Activated B cell treated with CpG ODN at 0.5 μM for 24 hours (primary cell): ENCODE measurements at regions of chr12 and their contacts with region 1.

Region 1: DNA sequence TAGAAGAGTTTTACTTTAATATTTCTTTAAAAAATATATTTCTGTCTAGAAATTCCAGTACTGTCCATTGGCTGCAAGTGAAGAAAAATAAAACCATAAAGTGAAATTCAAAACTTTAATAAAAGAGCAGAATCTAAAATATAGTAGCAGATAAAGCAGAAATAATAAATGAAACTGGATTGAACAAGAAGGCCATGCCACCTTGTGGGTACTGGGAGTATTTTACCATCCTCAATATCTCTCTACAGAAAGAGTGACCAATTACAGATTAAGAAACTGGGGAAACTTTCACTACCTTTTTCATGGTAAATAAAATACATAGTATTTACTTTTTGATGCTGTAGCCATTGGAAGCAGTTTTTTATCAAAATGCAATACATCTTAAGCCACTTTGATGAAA is 220.5 kb downstream of the BCAT1 start:
- DNase-seq: no peak
- ATAC-seq: peak; percentile 26
- H3K4me3 Mint-ChIP-seq: no peak overlapping the region
- H3K27ac Mint-ChIP-seq: peak overlapping the region; percentile 85
- H3K4me1 Mint-ChIP-seq: peaks cover 98% of the 10 kb centered on the region
- H3K27me3 Mint-ChIP-seq: no peaks in the 10 kb centered on the region
- CTCF ChIP-seq: no peak

Region 2: DNA sequence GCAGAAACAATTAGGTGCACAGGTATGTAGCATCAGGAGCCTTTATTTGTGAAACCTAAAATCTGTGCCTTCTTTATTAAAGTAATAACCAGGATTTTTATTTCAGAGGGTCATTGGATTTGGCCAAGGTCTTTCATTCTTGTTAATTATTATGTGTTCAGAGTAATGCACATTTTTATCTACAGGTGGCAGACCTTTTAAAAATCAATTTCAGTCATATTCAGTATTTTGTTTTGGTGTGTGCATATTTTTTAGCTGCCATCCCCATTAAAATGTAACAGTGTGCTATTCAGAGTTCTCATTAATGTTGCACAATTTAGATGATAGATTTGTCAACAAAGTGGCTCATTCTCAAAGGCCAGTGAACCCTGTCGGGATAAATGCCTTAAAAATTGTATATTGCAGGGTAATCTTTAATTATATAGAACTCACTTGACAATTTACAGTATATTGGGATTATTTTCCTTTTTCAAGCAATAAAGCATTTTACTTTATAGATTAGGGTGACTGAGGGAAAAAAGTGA is 459.6 kb before region 1 on chr12:
- CTCF ChIA-PET with region 1: no interaction called
- POLR2A ChIA-PET with region 1: no interaction called
- intact Hi-C with region 1: loop called (anchors 5 kb)
- DNase-seq: no peak
- ATAC-seq: no peak
- H3K4me3 Mint-ChIP-seq: no peak overlapping the region
- H3K27ac Mint-ChIP-seq: no peak overlapping the region
- H3K4me1 Mint-ChIP-seq: no peaks in the 10 kb centered on the region
- H3K27me3 Mint-ChIP-seq: no peaks in the 10 kb centered on the region
- CTCF ChIP-seq: no peak

Region 3: DNA sequence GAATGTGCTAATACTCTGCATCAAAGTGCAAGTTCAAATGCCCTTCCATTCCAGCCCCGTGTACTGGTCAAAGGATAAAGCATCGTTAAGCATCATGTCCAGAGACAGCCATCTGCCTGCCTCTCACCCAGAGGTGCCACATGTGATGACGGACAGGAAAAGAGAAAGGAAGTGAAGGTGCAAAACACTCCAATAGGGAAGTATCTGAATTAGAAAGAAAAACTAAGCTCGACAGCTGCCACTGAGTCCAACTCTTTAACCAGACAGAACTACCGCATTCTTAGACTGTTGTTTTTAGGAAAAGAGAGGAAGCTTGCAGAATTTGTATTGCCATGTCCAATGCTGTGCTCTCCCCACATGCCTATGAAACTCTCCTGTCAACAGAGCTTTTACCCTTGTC is 313.9 kb before region 1 on chr12:
- CTCF ChIA-PET with region 1: interaction called, 4 read pairs
- POLR2A ChIA-PET with region 1: interaction called, 20 read pairs
- intact Hi-C with region 1: loop called (anchors 2 kb)
- DNase-seq: no peak
- ATAC-seq: peak; percentile 36
- H3K4me3 Mint-ChIP-seq: peak overlapping the region; percentile 80
- H3K27ac Mint-ChIP-seq: peak overlapping the region; percentile 89
- H3K4me1 Mint-ChIP-seq: peaks cover 61% of the 10 kb centered on the region
- H3K27me3 Mint-ChIP-seq: no peaks in the 10 kb centered on the region
- CTCF ChIP-seq: no peak

Region 4: GRCh38 chr12:24596768-24597388 is 131.5 kb before region 1 on chr12:
- CTCF ChIA-PET with region 1: interaction called, 3 read pairs
- POLR2A ChIA-PET with region 1: interaction called, 11 read pairs
- intact Hi-C with region 1: loop called (anchors 1 kb)
- DNase-seq: no peak
- ATAC-seq: no peak
- H3K4me3 Mint-ChIP-seq: no peak overlapping the region
- H3K27ac Mint-ChIP-seq: no peak overlapping the region
- H3K4me1 Mint-ChIP-seq: peaks cover 42% of the 10 kb centered on the region
- H3K27me3 Mint-ChIP-seq: no peaks in the 10 kb centered on the region
- CTCF ChIP-seq: no peak

Region 5: GRCh38 chr12:24742378-24742777 is 14.0 kb after region 1 on chr12:
- CTCF ChIA-PET with region 1: interaction called, 8 read pairs
- POLR2A ChIA-PET with region 1: interaction called, 73 read pairs
- intact Hi-C with region 1: loop called (anchors 1 kb)
- DNase-seq: peak; percentile 29
- ATAC-seq: peak; percentile 87
- H3K4me3 Mint-ChIP-seq: peak overlapping the region; percentile 64
- H3K27ac Mint-ChIP-seq: peak overlapping the region; percentile 90
- H3K4me1 Mint-ChIP-seq: peaks cover 56% of the 10 kb centered on the region
- H3K27me3 Mint-ChIP-seq: no peaks in the 10 kb centered on the region
- CTCF ChIP-seq: no peak

Region 6: GRCh38 chr12:24759155-24759554 is 30.8 kb after region 1 on chr12:
- CTCF ChIA-PET with region 1: no interaction called
- POLR2A ChIA-PET with region 1: no interaction called
- intact Hi-C with region 1: no loop called
- DNase-seq: no peak
- ATAC-seq: no peak
- H3K4me3 Mint-ChIP-seq: no peak overlapping the region
- H3K27ac Mint-ChIP-seq: no peak overlapping the region
- H3K4me1 Mint-ChIP-seq: peaks cover 5% of the 10 kb centered on the region
- H3K27me3 Mint-ChIP-seq: no peaks in the 10 kb centered on the region
- CTCF ChIP-seq: no peak

Region 7: DNA sequence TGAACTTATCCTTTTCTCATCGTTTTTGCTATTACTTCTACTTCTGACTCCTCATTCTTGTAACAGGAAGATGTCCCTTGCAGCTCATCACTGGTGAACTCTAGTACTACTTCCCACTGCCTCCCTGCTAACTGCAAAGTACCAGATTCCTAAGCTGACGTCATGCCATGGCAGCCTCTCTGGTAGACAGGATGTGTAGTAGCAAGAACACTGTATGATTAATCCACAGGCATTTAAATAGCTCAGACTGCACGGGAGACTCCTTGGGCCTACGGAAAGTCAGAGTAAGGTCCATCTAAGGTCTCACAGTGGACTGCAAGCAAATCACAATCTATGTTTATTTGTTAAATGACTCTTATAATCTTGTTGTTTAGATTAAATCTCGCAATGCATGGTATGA is 423.1 kb after region 1 on chr12:
- CTCF ChIA-PET with region 1: no interaction called
- POLR2A ChIA-PET with region 1: no interaction called
- intact Hi-C with region 1: loop called (anchors 5 kb)
- DNase-seq: no peak
- ATAC-seq: no peak
- H3K4me3 Mint-ChIP-seq: no peak overlapping the region
- H3K27ac Mint-ChIP-seq: no peak overlapping the region
- H3K4me1 Mint-ChIP-seq: peaks cover 22% of the 10 kb centered on the region
- H3K27me3 Mint-ChIP-seq: no peaks in the 10 kb centered on the region
- CTCF ChIP-seq: no peak